Activated CD8-positive, alpha-beta T cell treated with anti-CD3 and anti-CD28 coated beads for 36 hours (primary cell): ENCODE measurements at regions of chr3 and their contacts with region 1.

Region 1: GRCh38 chr3:48446425-48447193 is at the start of gene ATRIP:
- DNase-seq: peak; percentile 87
- ATAC-seq: peak; percentile 98
- H3K4me3 Mint-ChIP-seq: peak within 1 kb of the TSS; percentile 89
- H3K27ac Mint-ChIP-seq: peak within 1 kb of the TSS; percentile 83
- H3K4me1 Mint-ChIP-seq: peaks cover 40% of the 10 kb centered on the region
- H3K27me3 Mint-ChIP-seq: no peaks in the 10 kb centered on the region
- CTCF ChIP-seq: no peak
- total RNA-seq, gene ATRIP: 12.4 to 15.0 TPM

Region 2: DNA sequence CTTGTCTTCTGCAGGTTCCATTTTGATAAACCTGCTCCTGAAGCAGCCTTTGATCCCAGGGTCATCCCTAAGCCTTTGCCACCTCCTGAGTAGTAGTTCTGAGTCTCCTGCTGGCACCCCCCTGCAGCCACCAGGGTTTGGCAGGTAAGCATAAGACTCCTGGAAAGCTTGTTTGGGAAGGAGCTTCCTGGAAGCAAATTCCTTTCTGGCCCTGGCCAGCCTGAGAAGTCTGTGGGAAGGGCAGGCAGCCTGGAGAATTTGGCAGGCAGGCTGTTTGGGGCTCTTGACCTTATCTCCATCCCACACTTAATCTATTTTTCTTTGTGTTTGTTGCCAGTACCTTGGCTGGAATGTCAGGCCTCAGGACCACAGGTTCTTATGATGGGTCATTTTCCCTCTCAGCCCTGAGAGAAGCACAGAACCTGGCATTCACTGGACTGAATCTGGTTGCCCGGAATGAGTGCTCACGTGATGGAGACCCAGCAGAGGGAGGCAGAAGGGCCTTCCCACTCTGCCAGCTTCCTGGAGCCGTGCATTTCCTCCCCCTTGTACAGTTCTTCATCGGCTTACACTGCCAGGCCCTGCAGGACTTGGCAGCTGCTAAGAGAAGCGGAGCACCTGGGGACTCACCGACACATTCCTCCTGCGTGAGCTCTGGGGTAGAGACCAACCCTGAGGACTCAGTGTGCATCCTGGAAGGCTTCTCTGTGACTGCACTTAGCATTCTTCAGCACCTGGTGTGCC is 13.3 kb after region 1 on chr3:
- CTCF ChIA-PET with region 1: interaction called, 9 read pairs
- POLR2A ChIA-PET with region 1: interaction called, 32 read pairs
- intact Hi-C with region 1: no loop called
- DNase-seq: no peak
- ATAC-seq: no peak
- H3K4me3 Mint-ChIP-seq: no peak overlapping the region
- H3K27ac Mint-ChIP-seq: no peak overlapping the region
- H3K4me1 Mint-ChIP-seq: no peaks in the 10 kb centered on the region
- H3K27me3 Mint-ChIP-seq: no peaks in the 10 kb centered on the region
- CTCF ChIP-seq: no peak

Region 3: DNA sequence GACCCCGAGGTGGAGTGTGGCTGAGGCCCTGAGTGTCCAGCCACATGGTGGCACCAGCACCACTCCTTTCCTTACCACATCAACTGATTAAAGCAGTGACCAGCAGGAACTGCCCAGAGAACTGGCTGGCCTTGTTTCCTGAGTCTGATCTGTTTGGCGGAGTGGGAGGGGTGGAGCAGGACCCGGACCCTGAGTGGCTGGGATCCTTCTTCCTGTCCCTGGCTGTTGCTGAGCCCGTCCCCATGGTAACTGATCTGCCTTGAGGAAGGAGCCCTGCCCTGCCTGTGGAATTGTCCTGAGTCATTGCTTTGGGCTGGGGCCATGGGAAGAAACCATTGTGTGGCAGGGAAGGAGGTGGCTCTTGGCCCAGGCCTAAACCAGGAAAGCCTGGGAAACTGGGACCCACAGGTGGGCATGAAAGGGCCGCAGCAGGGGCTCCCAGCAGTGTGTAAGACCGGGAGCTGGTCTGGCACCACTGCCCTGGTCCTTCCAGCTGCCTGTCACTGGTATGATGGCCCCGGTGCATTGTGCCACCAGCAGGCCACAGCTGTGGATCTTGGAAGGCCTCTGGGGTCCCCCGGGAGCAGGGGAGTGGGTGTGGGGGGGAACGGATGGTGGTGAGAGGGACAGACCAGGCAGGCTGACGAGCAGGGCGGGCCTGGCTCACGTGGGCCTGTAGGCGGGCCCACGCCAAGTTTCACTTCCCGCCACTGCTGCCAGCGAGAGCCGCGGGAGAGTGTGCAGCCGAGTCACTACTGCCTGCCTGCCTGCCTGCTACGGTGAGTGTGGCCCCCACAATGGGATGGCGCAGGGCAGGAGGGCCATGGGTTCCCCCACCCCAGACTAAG is 19.1 kb after region 1 on chr3:
- CTCF ChIA-PET with region 1: interaction called, 5 read pairs
- POLR2A ChIA-PET with region 1: interaction called, 32 read pairs
- intact Hi-C with region 1: no loop called
- DNase-seq: peak; percentile 88
- ATAC-seq: peak; percentile 90
- H3K4me3 Mint-ChIP-seq: peak overlapping the region; percentile 87
- H3K27ac Mint-ChIP-seq: peak overlapping the region; percentile 96
- H3K4me1 Mint-ChIP-seq: peaks cover 40% of the 10 kb centered on the region
- H3K27me3 Mint-ChIP-seq: no peaks in the 10 kb centered on the region
- CTCF ChIP-seq: no peak

Region 4: DNA sequence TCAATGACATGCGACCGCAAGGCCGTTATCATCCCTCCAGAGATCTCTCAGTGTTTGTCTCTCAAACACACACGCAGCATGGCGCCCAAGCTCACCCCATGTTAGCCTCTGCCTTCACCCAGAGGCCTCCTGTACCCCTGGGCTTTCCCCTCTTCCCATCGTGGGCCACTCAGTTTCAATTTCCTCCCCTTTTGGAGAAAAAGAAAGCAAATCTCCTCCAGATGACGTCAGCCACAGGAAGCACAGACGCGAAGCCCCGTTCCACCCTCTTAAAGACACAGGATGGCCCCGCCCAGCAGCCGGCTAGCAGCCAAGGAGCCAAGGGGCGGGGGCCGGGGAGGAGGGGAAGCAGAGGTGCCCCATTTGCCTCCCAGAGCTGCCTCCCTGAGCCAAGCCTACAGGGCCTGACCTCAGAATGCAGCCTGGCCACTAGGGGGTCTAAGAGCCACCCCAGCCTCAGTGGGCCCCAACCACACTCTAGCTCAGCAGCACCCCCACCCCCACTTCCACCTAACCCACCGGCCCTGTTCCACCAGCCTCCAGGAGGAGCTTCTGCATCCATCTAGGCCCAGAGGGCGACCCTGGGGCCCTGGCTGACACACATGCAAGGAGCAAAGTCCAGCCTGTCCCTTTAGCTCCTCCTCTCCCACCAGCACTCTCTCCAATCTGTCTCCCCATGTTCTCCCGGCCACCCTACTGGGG is 26.5 kb after region 1 on chr3:
- CTCF ChIA-PET with region 1: no interaction called
- POLR2A ChIA-PET with region 1: interaction called, 32 read pairs
- intact Hi-C with region 1: no loop called
- DNase-seq: peak; percentile 99
- ATAC-seq: peak; percentile 92
- H3K4me3 Mint-ChIP-seq: peak overlapping the region; percentile 80
- H3K27ac Mint-ChIP-seq: peak overlapping the region; percentile 96
- H3K4me1 Mint-ChIP-seq: peaks cover 50% of the 10 kb centered on the region
- H3K27me3 Mint-ChIP-seq: no peaks in the 10 kb centered on the region
- CTCF ChIP-seq: peak; percentile 55

Region 5: DNA sequence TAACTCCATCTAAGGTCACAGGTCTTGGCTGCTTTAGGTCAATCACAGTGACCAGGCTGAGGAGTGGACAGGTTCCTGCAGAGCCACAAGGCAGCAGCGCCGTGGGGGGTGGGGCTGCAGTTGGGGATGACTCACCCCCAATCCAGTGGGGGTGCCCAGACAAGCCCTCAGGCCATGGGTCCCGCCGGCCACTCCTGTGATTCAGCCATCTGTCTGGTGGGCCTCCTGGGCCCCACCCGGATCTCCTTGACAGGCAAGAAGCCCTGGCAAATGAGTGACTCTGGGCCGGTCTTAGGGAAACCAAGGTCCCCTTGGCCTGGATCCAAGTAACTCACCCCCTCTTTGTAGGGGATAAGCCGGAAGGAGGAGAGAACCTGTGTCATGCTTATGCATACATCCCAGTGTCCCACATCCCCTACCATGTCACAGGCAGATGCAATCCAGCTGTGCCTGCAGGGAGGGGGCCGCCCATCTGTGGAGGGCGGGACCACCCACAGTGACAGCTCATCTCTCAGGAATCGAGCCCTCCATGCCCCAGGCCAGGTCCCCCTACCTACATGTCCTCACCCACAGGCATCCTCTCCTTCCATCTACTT is 149.0 kb after region 1 on chr3:
- CTCF ChIA-PET with region 1: no interaction called
- POLR2A ChIA-PET with region 1: no interaction called
- intact Hi-C with region 1: no loop called
- DNase-seq: peak; percentile 34
- ATAC-seq: peak; percentile 21
- H3K4me3 Mint-ChIP-seq: no peak overlapping the region
- H3K27ac Mint-ChIP-seq: no peak overlapping the region
- H3K4me1 Mint-ChIP-seq: peaks cover 5% of the 10 kb centered on the region
- H3K27me3 Mint-ChIP-seq: peaks cover 16% of the 10 kb centered on the region
- CTCF ChIP-seq: no peak